ENCODE measurements at regions of chr1 and their contacts with region 1.

Region 1: GRCh38 chr1:116674011-116674531 is 6.5 kb upstream of the IGSF3 start:
- H3K4me3 ChIP-seq: no peak overlapping the region
- H3K27ac ChIP-seq: no peak overlapping the region
- H3K4me1 ChIP-seq: no peaks in the 10 kb centered on the region
- CTCF ChIP-seq: no peak

Region 2: DNA sequence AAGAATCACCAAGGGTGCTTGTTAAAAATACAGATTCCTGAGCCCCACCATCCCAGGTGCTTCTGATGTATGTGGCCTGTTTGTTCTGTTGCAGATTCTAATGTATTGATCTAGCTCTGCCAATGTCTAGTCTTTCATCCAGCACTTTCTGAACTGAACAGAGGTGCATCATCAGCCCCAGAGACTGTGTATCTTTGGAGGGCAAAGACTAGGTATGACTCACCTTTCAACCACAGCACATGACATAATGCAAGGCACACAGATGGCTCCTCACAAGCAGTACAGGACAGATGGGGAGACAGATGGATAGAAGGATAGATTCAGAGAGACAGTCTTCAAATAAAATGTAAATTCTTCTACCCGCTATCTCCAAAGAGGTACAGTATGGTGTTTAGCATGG is 135.5 kb before region 1 on chr1:
- CTCF ChIA-PET with region 1: interaction called, 10 read pairs
- POLR2A ChIA-PET with region 1: no interaction called
- H3K4me3 ChIP-seq: no peak overlapping the region
- H3K27ac ChIP-seq: no peak overlapping the region
- H3K4me1 ChIP-seq: no peaks in the 10 kb centered on the region
- CTCF ChIP-seq: no peak

Region 3: DNA sequence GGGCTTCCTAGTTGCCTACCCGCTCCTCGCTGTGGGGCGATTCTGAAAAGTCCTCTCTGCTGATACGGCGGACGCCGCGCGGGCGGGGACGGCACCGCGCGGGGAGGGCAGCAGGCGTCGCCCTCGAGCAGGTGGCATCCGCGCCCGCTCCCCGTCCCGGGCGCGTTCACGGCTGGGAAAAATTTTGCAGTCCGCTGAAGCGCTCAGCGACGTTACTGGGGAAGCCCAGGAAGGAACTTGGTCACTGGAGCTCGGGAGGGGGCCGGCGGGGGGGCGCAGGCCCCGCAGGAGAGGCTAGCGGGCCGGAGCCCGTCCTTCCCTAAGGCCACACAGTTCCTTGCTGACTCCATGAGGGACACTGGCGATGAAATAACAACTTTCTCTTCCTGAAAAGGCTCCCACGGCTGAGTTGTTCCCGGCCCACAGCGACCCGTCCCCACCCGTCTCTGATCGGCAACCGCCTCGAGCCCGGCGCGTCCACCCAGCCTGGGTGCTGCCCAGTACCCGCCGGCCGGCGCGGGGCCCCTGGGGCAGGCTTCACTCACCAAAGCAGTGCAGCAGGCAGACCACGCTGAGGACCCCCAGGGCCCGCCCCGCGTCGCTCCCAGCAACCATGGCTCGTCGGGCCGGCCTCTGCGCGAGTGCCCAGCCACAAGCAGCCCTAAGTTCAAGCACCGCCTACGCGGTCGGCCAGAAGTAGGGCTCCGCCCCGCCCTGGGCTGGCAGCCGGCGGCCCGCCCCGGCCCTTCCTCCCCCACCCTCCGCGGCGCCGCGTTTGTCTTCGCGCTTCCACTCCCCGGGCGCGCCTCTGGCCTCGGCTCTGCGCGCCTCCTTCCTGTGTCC is 103.5 kb before region 1 on chr1 and contains the start of gene CD58:
- CTCF ChIA-PET with region 1: interaction called, 59 read pairs
- POLR2A ChIA-PET with region 1: interaction called, 3 read pairs
- H3K4me3 ChIP-seq: peak within 1 kb of the TSS; percentile 80
- H3K27ac ChIP-seq: peak within 1 kb of the TSS; percentile 56
- H3K4me1 ChIP-seq: no peaks in the 10 kb centered on the region; the same call in 1 of the 2 replicates
- CTCF ChIP-seq: peak; percentile 67

Region 4: GRCh38 chr1:116686723-116687368 is 12.8 kb after region 1 on chr1:
- CTCF ChIA-PET with region 1: interaction called, 17 read pairs
- POLR2A ChIA-PET with region 1: no interaction called
- H3K4me3 ChIP-seq: no peak overlapping the region
- H3K27ac ChIP-seq: no peak overlapping the region
- H3K4me1 ChIP-seq: no peaks in the 10 kb centered on the region
- CTCF ChIP-seq: no peak

Region 5: GRCh38 chr1:116769561-116769977 is 95.5 kb after region 1 on chr1:
- CTCF ChIA-PET with region 1: no interaction called
- POLR2A ChIA-PET with region 1: no interaction called
- H3K4me3 ChIP-seq: no peak overlapping the region
- H3K27ac ChIP-seq: no peak overlapping the region
- H3K4me1 ChIP-seq: no peaks in the 10 kb centered on the region
- CTCF ChIP-seq: no peak

Measured in HEK293 (cell line).